ENCODE measurements at regions of chr7 and their contacts with region 1.

Region 1: GRCh38 chr7:131919920-131920709 is 363.7 kb upstream of the PODXL start:
- DNase-seq: no peak
- ATAC-seq: no peak
- H3K4me3 ChIP-seq: no peak overlapping the region
- H3K4me3 Mint-ChIP-seq: no peak overlapping the region
- H3K27ac ChIP-seq: no peak overlapping the region
- H3K27ac Mint-ChIP-seq: no peak overlapping the region
- H3K4me1 ChIP-seq: no peaks in the 10 kb centered on the region
- H3K4me1 Mint-ChIP-seq: no peaks in the 10 kb centered on the region
- H3K27me3 ChIP-seq: no peaks in the 10 kb centered on the region
- H3K27me3 Mint-ChIP-seq: no peaks in the 10 kb centered on the region

Region 2: GRCh38 chr7:131943646-131944045 is 23.5 kb after region 1 on chr7:
- CTCF ChIA-PET with region 1: no interaction called
- POLR2A ChIA-PET with region 1: interaction called in 1 of 2 experiments, 11 read pairs
- DNase-seq: no peak
- ATAC-seq: no peak
- H3K4me3 ChIP-seq: no peak overlapping the region
- H3K4me3 Mint-ChIP-seq: no peak overlapping the region
- H3K27ac ChIP-seq: no peak overlapping the region
- H3K27ac Mint-ChIP-seq: no peak overlapping the region
- H3K4me1 ChIP-seq: peaks cover 0 to 3% of the 10 kb centered on the region in 2 experiments
- H3K4me1 Mint-ChIP-seq: peaks cover 0 to 11% (median 0%) of the 10 kb centered on the region in 3 donors
- H3K27me3 ChIP-seq: peaks cover 0 to 36% of the 10 kb centered on the region in 2 experiments
- H3K27me3 Mint-ChIP-seq: peaks cover 40 to 44% of the 10 kb centered on the region in 2 donors

Region 3: DNA sequence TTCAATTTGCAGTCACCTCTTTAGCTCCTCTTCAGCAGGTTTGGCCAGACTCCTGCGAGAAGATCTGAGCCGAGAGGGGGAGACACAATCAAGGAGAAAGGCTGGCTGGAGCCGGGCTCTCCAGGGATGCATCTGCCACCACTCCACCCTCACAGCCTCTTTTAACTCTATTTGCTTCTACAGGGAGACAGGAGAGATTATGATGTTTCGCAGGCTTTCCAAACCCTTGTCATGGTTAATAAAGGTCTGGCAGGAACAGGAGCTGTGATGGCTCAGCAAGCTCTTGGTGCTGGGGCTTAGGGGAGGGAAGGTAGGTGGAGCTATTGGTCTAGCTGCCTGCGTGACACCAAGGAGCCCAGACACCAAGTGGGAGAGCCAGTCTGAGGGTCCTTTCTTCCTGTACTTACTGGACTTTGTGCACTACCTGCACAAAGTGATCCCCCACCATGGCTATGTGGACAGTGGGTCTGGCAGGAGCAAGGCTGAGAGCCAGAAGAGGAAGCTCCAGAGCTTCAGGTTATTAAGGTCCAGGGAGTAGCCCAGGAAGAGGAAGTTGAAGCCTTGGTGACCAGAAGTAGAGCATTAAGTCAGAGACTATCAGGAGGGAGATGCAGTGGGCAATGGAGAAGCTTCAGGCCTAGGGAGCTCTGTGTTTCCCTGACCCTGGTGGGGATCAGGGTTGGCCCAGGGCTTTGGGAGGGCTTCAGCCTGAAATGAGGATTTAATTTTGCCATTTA is 84.6 kb after region 1 on chr7:
- CTCF ChIA-PET with region 1: no interaction called
- POLR2A ChIA-PET with region 1: no interaction called
- DNase-seq: no peak
- ATAC-seq: no peak
- H3K4me3 ChIP-seq: no peak overlapping the region
- H3K4me3 Mint-ChIP-seq: no peak overlapping the region
- H3K27ac ChIP-seq: no peak overlapping the region
- H3K27ac Mint-ChIP-seq: no peak overlapping the region
- H3K4me1 ChIP-seq: no peaks in the 10 kb centered on the region
- H3K4me1 Mint-ChIP-seq: no peaks in the 10 kb centered on the region
- H3K27me3 ChIP-seq: peaks cover 2% of the 10 kb centered on the region in 2 experiments
- H3K27me3 Mint-ChIP-seq: no peaks in the 10 kb centered on the region